ENCODE measurements at regions of chr13 and their contacts with region 1.

Region 1: DNA sequence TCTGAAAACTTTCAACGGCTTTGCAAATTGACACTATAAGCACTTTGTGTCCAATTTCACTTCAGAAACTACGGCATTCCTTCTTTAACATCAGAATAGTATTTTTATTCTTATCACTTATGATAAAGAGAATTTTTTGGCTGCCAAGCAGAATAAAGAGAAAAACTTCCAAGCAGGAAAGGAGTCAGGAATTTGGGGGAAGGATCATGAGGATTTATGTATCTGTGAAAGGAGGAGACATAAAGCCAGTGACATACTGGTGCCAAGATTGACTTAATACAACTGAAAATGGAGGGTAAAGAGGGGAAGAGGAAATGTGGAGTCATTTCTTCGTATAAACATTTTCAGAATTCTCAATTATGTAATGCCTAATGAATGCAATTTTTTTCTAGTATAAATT is 94.7 kb downstream of the RBM26 start:
- DNase-seq: no peak
- ATAC-seq: no peak
- H3K4me3 ChIP-seq: no peak overlapping the region
- H3K4me1 ChIP-seq: no peaks in the 10 kb centered on the region
- CTCF ChIP-seq: no peak

Region 2: GRCh38 chr13:78997902-78998629 is 313.3 kb before region 1 on chr13:
- intact Hi-C with region 1: no loop called
- DNase-seq: no peak
- ATAC-seq: no peak
- H3K4me3 ChIP-seq: no peak overlapping the region
- H3K4me1 ChIP-seq: no peaks in the 10 kb centered on the region
- CTCF ChIP-seq: no peak

Region 3: DNA sequence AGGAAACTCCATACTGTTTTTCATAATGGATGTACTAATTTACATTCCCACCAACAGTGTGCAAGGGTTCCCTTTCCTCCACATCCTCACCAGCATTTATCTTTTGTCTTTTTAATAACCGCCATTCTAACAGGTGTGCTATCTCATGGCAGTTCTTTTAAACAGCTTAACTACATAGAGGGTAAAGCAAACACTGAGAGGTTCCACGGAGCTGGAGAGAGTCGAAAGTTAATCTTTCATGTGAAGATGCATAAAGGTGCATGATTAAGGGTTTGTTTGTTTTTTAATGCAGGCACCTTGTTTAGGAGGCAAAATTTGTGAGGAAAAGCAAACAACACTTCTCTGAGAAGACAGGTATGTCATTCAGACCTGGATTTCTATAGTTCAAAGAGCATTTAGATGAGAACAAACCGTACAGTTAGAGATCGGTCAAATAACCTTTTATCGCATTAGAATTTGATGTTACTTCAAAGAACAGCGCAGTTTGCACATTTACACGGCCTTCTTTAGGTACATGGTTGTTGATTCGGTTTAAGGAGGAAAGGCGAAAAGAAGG is 99.2 kb before region 1 on chr13:
- intact Hi-C with region 1: loop called in 1 of 2 experiments (anchors 5 kb)
- DNase-seq: no peak
- ATAC-seq: no peak
- H3K4me3 ChIP-seq: no peak overlapping the region
- H3K4me1 ChIP-seq: no peaks in the 10 kb centered on the region
- CTCF ChIP-seq: no peak

Region 4: GRCh38 chr13:79379274-79379673 is 67.9 kb after region 1 on chr13:
- intact Hi-C with region 1: no loop called
- DNase-seq: no peak
- ATAC-seq: no peak
- H3K4me3 ChIP-seq: no peak overlapping the region
- H3K4me1 ChIP-seq: peaks cover 10% of the 10 kb centered on the region
- CTCF ChIP-seq: no peak

Region 5: GRCh38 chr13:79451500-79451962 is 140.1 kb after region 1 on chr13:
- intact Hi-C with region 1: no loop called
- DNase-seq: peak; percentile 31 to 58 (median 38)
- ATAC-seq: peak; percentile 80
- H3K4me3 ChIP-seq: no peak overlapping the region
- H3K4me1 ChIP-seq: no peaks in the 10 kb centered on the region
- CTCF ChIP-seq: no peak

Region 6: GRCh38 chr13:79581870-79582315 is 270.5 kb after region 1 on chr13:
- intact Hi-C with region 1: no loop called
- DNase-seq: peak in 1 of 3 donors; percentile 37
- ATAC-seq: no peak
- H3K4me3 ChIP-seq: no peak overlapping the region
- H3K4me1 ChIP-seq: no peaks in the 10 kb centered on the region
- CTCF ChIP-seq: no peak

Measured in mucosa of descending colon (tissue), 3 donors.